ENCODE measurements at regions of chr12 and their contacts with region 1.

Region 1: GRCh38 chr12:54214553-54215406 is 26.0 kb upstream of the SMUG1 start:
- DNase-seq: peak; percentile 59
- ATAC-seq: peak; percentile 87
- H3K4me3 ChIP-seq: peak overlapping the region; percentile 46; the same call in 1 of the 2 replicates
- H3K27ac ChIP-seq: peak overlapping the region; percentile 39
- H3K4me1 ChIP-seq: peaks cover 33% of the 10 kb centered on the region
- H3K27me3 ChIP-seq: peaks cover 0 to 1% of the 10 kb centered on the region in 2 experiments; a peak in 1 of 4 replicates
- CTCF ChIP-seq: peak; percentile 99 to 100 (median 99); a peak in 5 of 6 replicates
- EP300 ChIP-seq: no peak
- POLR2A ChIP-seq: no peak
- RAD21 ChIP-seq: peak; percentile 50; the same call in 1 of the 2 replicates

Region 2: GRCh38 chr12:53842686-53843085 is 372.1 kb before region 1 on chr12:
- CTCF ChIA-PET with region 1: no interaction called
- POLR2A ChIA-PET with region 1: no interaction called
- RAD21 ChIA-PET with region 1: no interaction called
- SMC1A ChIA-PET with region 1: no interaction called
- in situ Hi-C with region 1: no loop called
- intact Hi-C with region 1: no loop called
- DNase-seq: no peak
- ATAC-seq: no peak
- H3K4me3 ChIP-seq: no peak overlapping the region
- H3K27ac ChIP-seq: no peak overlapping the region
- H3K4me1 ChIP-seq: no peaks in the 10 kb centered on the region
- H3K27me3 ChIP-seq: peaks cover 0 to 5% of the 10 kb centered on the region in 2 experiments; a peak in 3 of 4 replicates
- CTCF ChIP-seq: no peak
- EP300 ChIP-seq: no peak
- POLR2A ChIP-seq: no peak
- RAD21 ChIP-seq: no peak

Region 3: DNA sequence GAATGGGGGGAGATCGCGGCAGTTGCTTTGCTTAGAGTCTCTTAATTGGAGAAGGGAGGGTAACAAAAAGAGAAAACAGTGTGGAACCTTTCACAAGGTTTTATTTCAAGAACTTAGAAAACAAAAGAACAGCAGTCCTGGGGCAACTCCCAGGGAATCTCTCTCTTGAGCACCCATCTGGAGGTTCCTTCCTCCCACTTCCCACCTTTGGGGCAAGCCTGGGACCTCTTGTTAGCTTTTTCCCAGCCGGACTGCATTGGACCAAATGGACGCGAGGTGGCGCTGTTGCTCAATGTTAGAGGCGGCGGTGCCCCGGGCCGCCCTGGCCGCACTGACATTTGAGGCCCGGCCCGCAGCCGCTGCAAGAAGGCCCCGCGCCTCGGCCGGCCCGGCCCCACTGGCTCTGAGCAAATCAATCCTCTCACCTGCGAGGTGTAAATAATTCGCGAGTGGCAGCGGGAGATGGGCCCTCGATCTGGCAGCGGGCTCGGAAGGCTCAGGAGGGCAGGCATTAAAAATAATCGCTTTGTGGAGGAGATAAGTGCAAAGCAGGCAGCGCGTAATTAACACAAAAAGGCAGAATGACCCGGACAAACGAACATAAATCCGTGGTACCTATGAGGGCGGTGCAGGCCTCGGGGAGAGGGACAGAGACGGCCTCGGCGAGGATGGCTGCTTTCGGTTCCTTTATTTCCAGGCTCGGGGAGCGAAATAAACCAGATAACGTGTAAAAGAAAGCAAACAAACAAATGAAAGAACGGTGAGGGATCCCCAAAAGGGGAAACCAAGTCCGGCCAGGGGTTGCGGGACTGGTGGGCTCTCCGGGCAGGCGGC is 208.7 kb before region 1 on chr12:
- CTCF ChIA-PET with region 1: interaction called, 74 read pairs
- POLR2A ChIA-PET with region 1: interaction called, 4 read pairs
- RAD21 ChIA-PET with region 1: interaction called, 38 read pairs
- SMC1A ChIA-PET with region 1: interaction called, 6 read pairs
- in situ Hi-C with region 1: no loop called
- intact Hi-C with region 1: no loop called
- DNase-seq: no peak
- ATAC-seq: peak; percentile 91
- H3K4me3 ChIP-seq: peak overlapping the region; percentile 54; the same call in 1 of the 2 replicates
- H3K27ac ChIP-seq: no peak overlapping the region
- H3K4me1 ChIP-seq: peaks cover 6% of the 10 kb centered on the region
- H3K27me3 ChIP-seq: peaks cover 33 to 34% of the 10 kb centered on the region in 2 experiments
- CTCF ChIP-seq: peak; percentile 74 to 93 (median 84)
- EP300 ChIP-seq: 0 out of 4 replicates have a peak, but pooled peaks of 1 of the 2 experiments have one; percentile 15
- POLR2A ChIP-seq: no peak
- RAD21 ChIP-seq: peak; percentile 91

Region 4: DNA sequence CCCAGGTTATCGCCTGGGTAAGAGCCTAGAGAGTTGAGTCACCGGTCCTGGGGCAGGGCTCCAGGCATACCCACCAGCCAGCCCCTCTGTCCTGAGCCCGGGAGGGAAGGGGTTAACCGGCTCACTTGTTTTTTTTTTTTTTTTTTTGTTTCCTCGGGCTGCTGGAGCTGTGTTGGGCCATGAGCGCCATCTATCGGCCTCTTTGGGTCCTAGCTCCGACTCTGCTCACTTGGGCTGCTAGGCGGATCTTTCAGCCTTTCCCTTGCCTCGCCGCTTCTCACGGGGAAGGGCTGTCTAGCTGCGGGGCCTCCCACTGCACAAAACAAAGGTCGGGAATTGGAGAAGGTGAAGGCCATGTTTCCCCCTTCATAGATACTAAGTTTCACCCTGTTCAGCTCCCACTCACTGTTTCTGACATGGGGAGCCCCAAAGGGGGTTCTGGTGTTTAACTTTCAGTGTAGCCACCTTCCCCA is 23.2 kb before region 1 on chr12:
- CTCF ChIA-PET with region 1: interaction called, 61 read pairs
- POLR2A ChIA-PET with region 1: no interaction called
- RAD21 ChIA-PET with region 1: interaction called, 4 read pairs
- SMC1A ChIA-PET with region 1: interaction called, 4 read pairs
- in situ Hi-C with region 1: no loop called
- intact Hi-C with region 1: no loop called
- DNase-seq: no peak
- ATAC-seq: peak; percentile 70
- H3K4me3 ChIP-seq: no peak overlapping the region
- H3K27ac ChIP-seq: no peak overlapping the region
- H3K4me1 ChIP-seq: peaks cover 10% of the 10 kb centered on the region
- H3K27me3 ChIP-seq: peaks cover 2 to 3% of the 10 kb centered on the region in 2 experiments; a peak in 1 of 4 replicates
- CTCF ChIP-seq: peak; percentile 86 to 94 (median 88)
- EP300 ChIP-seq: no peak; a peak in 1 of 4 replicates
- POLR2A ChIP-seq: no peak
- RAD21 ChIP-seq: peak; percentile 92

Region 5: GRCh38 chr12:54240971-54241588 is 26.3 kb after region 1 on chr12:
- CTCF ChIA-PET with region 1: interaction called, 43 read pairs
- POLR2A ChIA-PET with region 1: interaction called, 4 read pairs
- RAD21 ChIA-PET with region 1: interaction called, 6 read pairs
- SMC1A ChIA-PET with region 1: interaction called, 6 read pairs
- in situ Hi-C with region 1: no loop called
- intact Hi-C with region 1: no loop called
- DNase-seq: peak; percentile 80
- ATAC-seq: peak; percentile 95
- H3K4me3 ChIP-seq: no peak overlapping the region
- H3K27ac ChIP-seq: peak overlapping the region; percentile 45
- H3K4me1 ChIP-seq: peaks cover 16% of the 10 kb centered on the region
- H3K27me3 ChIP-seq: no peaks in the 10 kb centered on the region
- CTCF ChIP-seq: no peak
- EP300 ChIP-seq: 0 out of 4 replicates have a peak, but pooled peaks of 1 of the 2 experiments have one; percentile 39
- POLR2A ChIP-seq: no peak
- RAD21 ChIP-seq: no peak

Region 6: GRCh38 chr12:54279866-54280467 is 65.2 kb after region 1 on chr12 and contains the start of gene CBX5:
- CTCF ChIA-PET with region 1: interaction called, 24 read pairs
- POLR2A ChIA-PET with region 1: interaction called, 6 read pairs
- RAD21 ChIA-PET with region 1: interaction called, 4 read pairs
- SMC1A ChIA-PET with region 1: interaction called, 9 read pairs
- in situ Hi-C with region 1: no loop called
- intact Hi-C with region 1: no loop called
- DNase-seq: peak; percentile 98
- ATAC-seq: peak; percentile 48
- H3K4me3 ChIP-seq: peak within 1 kb of the TSS; percentile 81
- H3K27ac ChIP-seq: peak within 1 kb of the TSS; percentile 99
- H3K4me1 ChIP-seq: peaks cover 18% of the 10 kb centered on the region
- H3K27me3 ChIP-seq: no peaks in the 10 kb centered on the region
- CTCF ChIP-seq: no peak
- EP300 ChIP-seq: no peak
- POLR2A ChIP-seq: peak; percentile 83
- RAD21 ChIP-seq: no peak
- polyA plus RNA-seq, gene CBX5: 66.9 to 67.1 TPM

Region 7: GRCh38 chr12:54359033-54359761 is 144.4 kb after region 1 on chr12:
- CTCF ChIA-PET with region 1: interaction called, 83 read pairs
- POLR2A ChIA-PET with region 1: interaction called, 4 read pairs
- RAD21 ChIA-PET with region 1: interaction called, 16 read pairs
- SMC1A ChIA-PET with region 1: interaction called, 10 read pairs
- in situ Hi-C with region 1: loop called (anchors 5 kb)
- intact Hi-C with region 1: no loop called
- DNase-seq: peak; percentile 97
- ATAC-seq: peak; percentile 96
- H3K4me3 ChIP-seq: peak overlapping the region; percentile 84
- H3K27ac ChIP-seq: peak overlapping the region; percentile 92
- H3K4me1 ChIP-seq: peaks cover 23% of the 10 kb centered on the region
- H3K27me3 ChIP-seq: no peaks in the 10 kb centered on the region
- CTCF ChIP-seq: no peak
- EP300 ChIP-seq: peak in 1 of 2 experiments; percentile 55; a peak in 2 of 4 replicates
- POLR2A ChIP-seq: peak; percentile 63
- RAD21 ChIP-seq: no peak

Region 8: GRCh38 chr12:54385241-54385914 is 170.6 kb after region 1 on chr12:
- CTCF ChIA-PET with region 1: interaction called, 36 read pairs
- POLR2A ChIA-PET with region 1: interaction called, 4 read pairs
- RAD21 ChIA-PET with region 1: interaction called, 3 read pairs
- SMC1A ChIA-PET with region 1: interaction called, 7 read pairs
- in situ Hi-C with region 1: no loop called
- intact Hi-C with region 1: no loop called
- DNase-seq: no peak
- ATAC-seq: peak; percentile 86
- H3K4me3 ChIP-seq: peak overlapping the region; percentile 45; the same call in 1 of the 2 replicates
- H3K27ac ChIP-seq: peak overlapping the region; percentile 71
- H3K4me1 ChIP-seq: peaks cover 14% of the 10 kb centered on the region
- H3K27me3 ChIP-seq: no peaks in the 10 kb centered on the region
- CTCF ChIP-seq: no peak
- EP300 ChIP-seq: 0 out of 4 replicates have a peak, but pooled peaks of 1 of the 2 experiments have one; percentile 12
- POLR2A ChIP-seq: no peak
- RAD21 ChIP-seq: no peak